Activated naive CD4-positive, alpha-beta T cell treated with anti-CD3 and anti-CD28 coated beads, Interleukin-2, amount 10 ng/mL, durations not matched to agents 7 days and 5 days (primary cell): ENCODE measurements at regions of chr20 and their contacts with region 1.

Region 1: DNA sequence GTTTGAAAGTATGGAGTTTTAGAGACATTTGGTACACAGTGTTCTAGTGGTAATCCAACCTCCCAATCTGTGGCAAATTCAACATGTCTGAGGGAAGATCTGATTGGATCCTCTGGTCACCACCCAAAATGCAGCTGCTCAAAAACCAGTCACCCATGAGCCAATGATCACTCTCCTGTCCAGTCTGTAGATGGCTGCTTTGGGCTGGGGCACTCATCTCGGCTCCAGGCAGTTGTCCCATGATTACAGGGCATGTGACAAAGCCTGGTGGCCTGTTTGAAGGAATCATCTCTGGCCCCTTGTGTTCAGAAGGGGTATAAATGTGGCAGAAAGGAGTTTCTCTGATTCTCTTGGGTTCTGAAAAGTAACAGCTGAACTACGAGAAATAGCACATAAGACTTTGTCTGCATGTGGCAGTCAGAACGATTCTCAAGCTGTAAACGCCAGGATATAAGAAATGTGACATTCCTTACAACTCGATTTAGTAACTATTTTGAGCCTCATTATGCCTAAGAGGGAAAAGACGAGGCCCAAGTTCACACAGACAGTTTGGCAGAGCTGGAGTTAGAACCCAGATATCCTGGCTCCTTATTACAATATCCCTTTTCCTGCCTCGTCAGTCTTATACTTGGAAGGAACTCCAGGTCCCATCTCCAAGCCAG is 3.9 kb upstream of the C20orf202 start:
- DNase-seq: no peak
- H3K4me3 Mint-ChIP-seq: no peak overlapping the region
- H3K27ac Mint-ChIP-seq: no peak overlapping the region
- H3K4me1 Mint-ChIP-seq: peaks cover 8% of the 10 kb centered on the region
- H3K27me3 Mint-ChIP-seq: peaks cover 13% of the 10 kb centered on the region

Region 2: DNA sequence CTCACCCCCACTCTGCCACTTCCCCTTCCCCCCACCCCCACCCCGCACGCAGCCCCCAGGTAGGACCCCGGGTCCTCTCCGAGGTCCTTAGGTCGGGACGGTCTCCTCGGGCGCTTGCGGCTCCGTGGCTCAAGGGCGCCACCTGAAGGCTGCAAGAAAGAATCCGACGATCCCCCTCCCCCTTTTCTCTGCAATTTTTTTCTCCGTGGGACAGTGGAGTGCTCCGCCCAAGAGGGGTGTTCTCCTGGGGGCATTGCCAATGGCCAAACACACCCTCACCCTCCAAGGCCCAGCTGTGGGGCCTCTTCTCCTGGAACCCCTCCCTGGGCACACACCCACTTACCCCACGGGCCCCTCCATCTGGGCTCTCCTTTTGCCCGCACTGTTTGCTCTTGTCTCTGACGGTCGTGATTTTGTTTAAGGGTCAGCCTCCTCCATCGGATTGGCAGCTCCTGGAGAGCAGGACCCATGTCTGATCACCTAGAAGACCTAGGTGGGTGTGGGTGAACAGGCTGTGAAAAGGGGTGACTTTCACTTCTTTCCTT is 13.5 kb before region 1 on chr20:
- CTCF ChIA-PET with region 1: interaction called, 11 read pairs
- DNase-seq: peak; percentile 70
- H3K4me3 Mint-ChIP-seq: peak overlapping the region; percentile 58
- H3K27ac Mint-ChIP-seq: no peak overlapping the region
- H3K4me1 Mint-ChIP-seq: peaks cover 11% of the 10 kb centered on the region
- H3K27me3 Mint-ChIP-seq: peaks cover 48% of the 10 kb centered on the region

Region 3: DNA sequence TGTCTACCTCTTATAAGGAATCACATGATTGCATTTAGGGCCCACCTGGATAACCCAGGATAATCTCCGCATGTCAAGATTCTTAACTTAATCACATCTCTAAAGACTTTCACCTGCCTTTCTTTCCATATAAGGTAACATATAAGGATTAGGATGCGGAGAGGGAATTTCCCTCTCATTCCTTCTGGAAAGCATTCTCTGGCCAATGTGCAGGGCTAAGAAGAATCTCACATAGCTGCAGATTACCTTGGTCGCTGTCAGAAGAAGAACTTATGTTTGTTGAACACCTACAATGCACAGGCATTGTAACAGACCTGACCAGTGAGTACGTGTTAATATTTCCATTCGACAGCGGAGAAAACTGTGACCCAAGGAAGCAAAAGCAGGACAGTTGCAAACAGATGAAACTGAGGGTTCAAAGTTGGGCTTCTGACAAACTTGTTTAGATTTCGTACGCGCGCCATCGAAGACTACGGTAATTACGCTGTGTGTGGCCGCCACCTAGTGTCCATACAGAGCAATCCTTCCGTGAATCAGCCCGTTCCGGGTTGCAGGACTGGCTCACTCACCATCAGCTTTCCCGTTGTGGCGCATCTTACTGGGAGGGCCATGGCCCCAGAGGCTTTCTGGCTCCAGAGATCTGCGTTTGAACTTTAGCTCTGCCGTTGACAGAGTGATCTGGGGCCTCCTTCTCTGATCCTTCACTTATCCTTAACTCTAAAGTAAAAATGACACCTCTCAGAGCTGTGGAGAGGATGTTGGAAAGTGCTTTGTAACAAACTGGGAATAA is 13.5 kb after region 1 on chr20:
- CTCF ChIA-PET with region 1: interaction called, 12 read pairs
- DNase-seq: peak; percentile 80
- H3K4me3 Mint-ChIP-seq: no peak overlapping the region
- H3K27ac Mint-ChIP-seq: no peak overlapping the region
- H3K4me1 Mint-ChIP-seq: peaks cover 46% of the 10 kb centered on the region
- H3K27me3 Mint-ChIP-seq: peaks cover 21% of the 10 kb centered on the region